GM12878 (cell line): ENCODE measurements at regions of chr5 and their contacts with region 1.

Region 1: GRCh38 chr5:65742565-65743231 is 20.7 kb downstream of the NLN start:
- DNase-seq: peak; percentile 21
- ATAC-seq: peak; percentile 95
- H3K4me3 ChIP-seq: no peak overlapping the region
- H3K27ac ChIP-seq: no peak overlapping the region
- H3K4me1 ChIP-seq: no peaks in the 10 kb centered on the region; the same call in 1 of the 2 replicates
- H3K27me3 ChIP-seq: no peaks in the 10 kb centered on the region
- CTCF ChIP-seq: peak; percentile 63 to 74 (median 65)
- EP300 ChIP-seq: no peak; a peak in 1 of 4 replicates
- POLR2A ChIP-seq: no peak
- RAD21 ChIP-seq: peak; percentile 87

Region 2: DNA sequence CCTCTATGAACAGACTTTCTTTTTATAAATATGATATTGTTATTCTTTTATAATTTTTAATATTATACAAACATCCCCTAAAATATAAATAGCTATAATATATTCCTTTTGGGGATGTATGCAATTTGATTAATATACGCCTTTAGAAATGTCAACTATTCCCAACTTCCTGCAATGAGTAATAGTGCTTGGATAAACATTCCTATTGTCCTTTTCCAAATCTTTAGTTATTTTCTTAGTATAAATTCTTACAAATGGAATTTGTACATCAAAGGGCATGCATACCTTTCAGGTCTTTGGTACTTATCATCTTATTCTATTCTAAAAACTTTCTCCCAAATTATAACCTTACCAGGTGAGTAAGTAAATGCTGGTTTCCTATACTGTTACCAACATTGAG is 14.5 kb before region 1 on chr5:
- CTCF ChIA-PET with region 1: interaction called, 20 read pairs
- POLR2A ChIA-PET with region 1: interaction called, 6 read pairs
- RAD21 ChIA-PET with region 1: interaction called, 6 read pairs
- SMC1A ChIA-PET with region 1: interaction called, 13 read pairs
- in situ Hi-C with region 1: no loop called
- intact Hi-C with region 1: no loop called
- DNase-seq: no peak
- ATAC-seq: no peak
- H3K4me3 ChIP-seq: no peak overlapping the region
- H3K27ac ChIP-seq: no peak overlapping the region
- H3K4me1 ChIP-seq: peaks cover 13% of the 10 kb centered on the region
- H3K27me3 ChIP-seq: no peaks in the 10 kb centered on the region
- CTCF ChIP-seq: no peak
- EP300 ChIP-seq: no peak
- POLR2A ChIP-seq: no peak
- RAD21 ChIP-seq: no peak

Region 3: GRCh38 chr5:66010476-66010875 is 267.8 kb after region 1 on chr5:
- CTCF ChIA-PET with region 1: interaction called, 3 read pairs
- POLR2A ChIA-PET with region 1: interaction called, 3 read pairs
- RAD21 ChIA-PET with region 1: no interaction called
- SMC1A ChIA-PET with region 1: no interaction called
- in situ Hi-C with region 1: no loop called
- intact Hi-C with region 1: loop called (anchors 10 kb)
- DNase-seq: peak; percentile 12
- ATAC-seq: peak; percentile 79
- H3K4me3 ChIP-seq: no peak overlapping the region; the same call in 1 of the 2 replicates
- H3K27ac ChIP-seq: peak overlapping the region; percentile 34; the same call in 1 of the 2 replicates
- H3K4me1 ChIP-seq: peaks cover 5% of the 10 kb centered on the region; the same call in 1 of the 2 replicates
- H3K27me3 ChIP-seq: no peaks in the 10 kb centered on the region
- CTCF ChIP-seq: no peak
- EP300 ChIP-seq: peak in 1 of 2 experiments; percentile 50; a peak in 1 of 4 replicates
- POLR2A ChIP-seq: no peak
- RAD21 ChIP-seq: no peak

Region 4: GRCh38 chr5:66144074-66144833 is 401.6 kb after region 1 on chr5 and contains the start of gene SREK1:
- CTCF ChIA-PET with region 1: no interaction called
- POLR2A ChIA-PET with region 1: no interaction called
- RAD21 ChIA-PET with region 1: no interaction called
- SMC1A ChIA-PET with region 1: no interaction called
- in situ Hi-C with region 1: no loop called
- intact Hi-C with region 1: loop called (anchors 5 kb)
- DNase-seq: peak; percentile 63
- ATAC-seq: peak; percentile 94
- H3K4me3 ChIP-seq: peak within 1 kb of the TSS; percentile 90
- H3K27ac ChIP-seq: peak within 1 kb of the TSS; percentile 94
- H3K4me1 ChIP-seq: peaks cover 4% of the 10 kb centered on the region; the same call in 1 of the 2 replicates
- H3K27me3 ChIP-seq: no peaks in the 10 kb centered on the region
- CTCF ChIP-seq: no peak
- EP300 ChIP-seq: peak in 1 of 2 experiments; percentile 17; a peak in 1 of 4 replicates
- POLR2A ChIP-seq: peak; percentile 96
- RAD21 ChIP-seq: no peak
- polyA plus RNA-seq, gene SREK1: 30.7 to 31.6 TPM